Activated CD8-positive, alpha-beta T cell treated with anti-CD3 and anti-CD28 coated beads, Interleukin-2, amount 10 ng/mL, durations not matched to agents 7 days and 5 days (primary cell): ENCODE measurements at regions of chr1 and their contacts with region 1.

Region 1: DNA sequence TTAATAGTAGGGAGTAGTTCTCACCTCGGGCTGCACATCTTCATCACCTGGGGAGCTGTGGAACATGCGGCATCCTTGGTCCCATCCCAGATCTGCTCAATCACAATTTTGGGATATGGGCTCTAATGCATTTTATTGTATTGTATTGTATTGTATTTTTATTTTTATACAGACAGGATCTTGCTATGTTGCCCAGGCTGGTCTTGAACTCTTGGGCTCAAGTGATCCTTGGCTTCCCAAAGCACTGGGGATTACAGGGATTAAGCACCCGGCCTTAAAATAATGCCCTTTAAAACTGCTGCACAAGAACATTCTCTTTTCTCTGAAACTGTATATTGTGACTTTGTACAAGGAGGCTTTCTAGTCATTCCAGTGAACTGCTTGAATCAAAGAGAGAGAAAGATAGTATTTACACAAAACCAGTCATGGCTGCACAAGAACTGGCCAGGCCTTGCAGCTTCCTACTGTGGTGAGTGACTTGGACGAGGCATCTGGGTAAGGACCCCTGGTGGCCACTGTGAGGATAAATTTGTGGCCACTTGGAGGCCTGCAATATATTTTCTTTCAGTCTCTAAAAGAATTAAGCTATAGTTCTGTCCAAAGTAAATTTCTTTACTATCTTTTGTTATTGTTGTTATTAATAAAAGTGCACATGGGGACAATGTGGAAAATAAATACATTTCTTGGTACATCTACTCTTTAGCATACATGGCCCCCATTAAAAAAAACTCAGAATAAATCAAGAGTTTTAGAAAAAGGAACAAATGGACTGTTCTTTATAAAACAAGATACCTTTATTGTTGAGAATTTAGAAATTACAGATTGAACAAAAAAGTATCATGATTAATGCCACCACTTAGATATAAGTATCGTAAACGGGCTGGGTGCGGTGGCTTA is 48.0 kb downstream of the TBCE start:
- DNase-seq: peak; percentile 74
- ATAC-seq: peak; percentile 53
- H3K4me3 Mint-ChIP-seq: no peak overlapping the region
- H3K27ac Mint-ChIP-seq: no peak overlapping the region
- H3K4me1 Mint-ChIP-seq: peaks cover 9% of the 10 kb centered on the region
- H3K27me3 Mint-ChIP-seq: no peaks in the 10 kb centered on the region

Region 2: GRCh38 chr1:235122348-235122747 is 292.9 kb before region 1 on chr1:
- CTCF ChIA-PET with region 1: interaction called, 18 read pairs
- POLR2A ChIA-PET with region 1: no interaction called
- DNase-seq: no peak
- ATAC-seq: no peak
- H3K4me3 Mint-ChIP-seq: no peak overlapping the region
- H3K27ac Mint-ChIP-seq: no peak overlapping the region
- H3K4me1 Mint-ChIP-seq: peaks cover 43% of the 10 kb centered on the region
- H3K27me3 Mint-ChIP-seq: no peaks in the 10 kb centered on the region

Region 3: GRCh38 chr1:235181561-235182245 is 233.6 kb before region 1 on chr1:
- CTCF ChIA-PET with region 1: interaction called, 11 read pairs
- POLR2A ChIA-PET with region 1: no interaction called
- DNase-seq: no peak
- ATAC-seq: no peak
- H3K4me3 Mint-ChIP-seq: no peak overlapping the region
- H3K27ac Mint-ChIP-seq: peak overlapping the region; percentile 22
- H3K4me1 Mint-ChIP-seq: peaks cover 19% of the 10 kb centered on the region
- H3K27me3 Mint-ChIP-seq: no peaks in the 10 kb centered on the region

Region 4: DNA sequence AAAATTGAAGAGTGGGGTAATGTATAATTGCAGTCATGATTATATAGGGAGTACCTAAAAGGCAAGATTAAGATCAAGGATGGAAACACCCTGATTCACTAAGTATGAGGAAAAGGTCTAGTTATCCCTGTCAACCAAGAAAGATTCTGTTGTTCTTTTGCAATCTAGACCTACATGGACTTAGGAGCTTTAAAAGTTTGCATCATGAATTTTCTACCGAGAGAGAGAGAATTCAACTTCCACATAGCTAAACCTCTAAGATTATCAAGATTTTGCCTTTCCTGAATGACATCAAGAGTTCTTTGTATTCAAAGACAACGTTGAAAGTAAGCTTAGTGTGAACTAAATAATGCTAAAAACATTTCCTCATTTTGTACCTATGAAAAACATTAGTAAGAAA is 175.4 kb before region 1 on chr1:
- CTCF ChIA-PET with region 1: interaction called, 34 read pairs
- POLR2A ChIA-PET with region 1: no interaction called
- DNase-seq: no peak
- ATAC-seq: no peak
- H3K4me3 Mint-ChIP-seq: no peak overlapping the region
- H3K27ac Mint-ChIP-seq: no peak overlapping the region
- H3K4me1 Mint-ChIP-seq: peaks cover 33% of the 10 kb centered on the region
- H3K27me3 Mint-ChIP-seq: no peaks in the 10 kb centered on the region

Region 5: GRCh38 chr1:235313931-235314678 is 101.2 kb before region 1 on chr1:
- CTCF ChIA-PET with region 1: interaction called, 11 read pairs
- POLR2A ChIA-PET with region 1: no interaction called
- DNase-seq: no peak
- ATAC-seq: no peak
- H3K4me3 Mint-ChIP-seq: peak overlapping the region; percentile 14
- H3K27ac Mint-ChIP-seq: peak overlapping the region; percentile 23
- H3K4me1 Mint-ChIP-seq: peaks cover 68% of the 10 kb centered on the region
- H3K27me3 Mint-ChIP-seq: no peaks in the 10 kb centered on the region

Region 6: DNA sequence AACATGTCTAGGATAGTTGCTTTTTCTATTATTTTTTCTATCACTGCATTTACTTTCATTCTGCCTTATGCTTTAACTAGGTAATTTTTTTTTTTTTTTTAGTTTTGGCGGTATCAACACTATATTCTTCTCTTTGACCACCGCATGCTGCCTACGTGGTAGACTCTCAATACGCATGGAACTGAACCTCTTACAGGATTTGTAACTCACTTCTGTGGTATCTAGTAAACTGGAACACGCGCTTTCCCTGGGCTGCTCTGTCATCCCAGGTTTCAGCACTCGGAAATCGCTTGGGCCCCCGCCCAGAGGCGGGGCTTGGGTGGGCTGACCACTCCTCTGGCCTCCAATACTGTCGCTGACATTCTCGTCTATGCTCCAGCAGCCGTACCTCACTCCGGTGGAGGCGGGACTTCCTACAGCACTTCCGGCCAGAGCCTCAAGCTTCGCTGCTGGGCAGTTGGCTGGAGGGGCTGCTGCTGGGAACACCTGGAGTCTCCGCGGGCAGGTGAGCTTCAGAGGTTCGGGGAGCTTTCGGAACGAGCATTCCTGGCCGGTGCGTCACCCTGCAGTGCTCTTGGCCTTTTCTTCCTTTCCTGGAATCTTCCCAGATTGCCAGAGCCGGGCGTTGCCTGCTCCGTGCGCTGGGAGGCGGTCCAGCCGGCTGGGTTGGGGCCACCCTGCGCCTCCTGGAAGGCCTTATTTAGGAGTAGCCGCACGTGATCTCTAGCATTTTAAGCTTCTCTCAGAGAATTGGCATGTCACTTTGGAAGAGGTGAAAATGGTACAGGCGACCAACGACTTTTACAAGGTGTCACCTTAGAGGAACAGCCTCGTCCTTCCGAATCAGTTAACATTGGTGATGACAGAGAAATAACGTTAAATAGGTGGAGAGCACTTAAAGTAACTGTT is 48.0 kb before region 1 on chr1 and contains the start of gene TBCE:
- CTCF ChIA-PET with region 1: interaction called, 11 read pairs
- POLR2A ChIA-PET with region 1: no interaction called
- DNase-seq: peak; percentile 92
- ATAC-seq: peak; percentile 100
- H3K4me3 Mint-ChIP-seq: peak within 1 kb of the TSS; percentile 99
- H3K27ac Mint-ChIP-seq: peak within 1 kb of the TSS; percentile 93
- H3K4me1 Mint-ChIP-seq: peaks cover 31% of the 10 kb centered on the region
- H3K27me3 Mint-ChIP-seq: no peaks in the 10 kb centered on the region
- total RNA-seq, gene TBCE: 28.1 to 31.9 TPM

Region 7: DNA sequence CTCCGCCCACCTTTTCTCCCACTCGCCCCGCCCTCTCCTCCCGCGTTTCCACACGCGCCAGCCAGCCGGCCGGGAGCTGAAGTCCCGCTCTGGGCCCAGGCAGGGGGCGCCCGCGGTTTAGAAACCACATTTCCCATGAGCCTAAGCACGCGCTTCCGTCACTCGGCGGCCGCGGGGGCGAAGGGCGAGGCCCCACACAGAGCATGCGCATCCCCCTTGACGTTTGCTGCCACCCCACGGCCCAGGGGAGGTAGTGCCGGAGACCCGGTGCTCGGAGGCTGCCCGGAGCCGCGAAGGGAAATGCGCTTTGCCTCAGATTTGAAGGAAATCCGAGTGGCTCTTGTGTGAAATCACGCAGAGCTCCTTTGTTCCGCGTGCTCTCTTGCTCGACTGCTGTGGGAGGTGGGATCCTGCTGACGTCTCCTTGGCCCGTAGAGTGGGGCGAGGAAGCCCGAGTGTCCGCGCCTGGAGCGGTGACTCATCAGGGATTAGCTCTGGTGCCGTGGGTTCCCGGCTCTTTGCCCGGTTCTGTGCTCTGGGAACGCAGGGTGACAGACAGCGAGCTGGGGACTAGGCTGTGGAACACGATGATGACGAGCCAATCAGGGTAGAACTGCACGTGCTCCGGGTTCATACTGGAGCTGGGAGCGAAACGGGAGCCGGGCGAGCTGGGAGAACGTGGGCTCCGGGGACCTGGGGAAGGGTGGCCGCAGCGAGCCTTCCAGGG is 89.4 kb after region 1 on chr1:
- CTCF ChIA-PET with region 1: interaction called, 13 read pairs
- POLR2A ChIA-PET with region 1: interaction called, 4 read pairs
- DNase-seq: peak; percentile 99
- ATAC-seq: peak; percentile 86
- H3K4me3 Mint-ChIP-seq: peak overlapping the region; percentile 90
- H3K27ac Mint-ChIP-seq: peak overlapping the region; percentile 97
- H3K4me1 Mint-ChIP-seq: peaks cover 19% of the 10 kb centered on the region
- H3K27me3 Mint-ChIP-seq: peaks cover 3% of the 10 kb centered on the region

Region 8: DNA sequence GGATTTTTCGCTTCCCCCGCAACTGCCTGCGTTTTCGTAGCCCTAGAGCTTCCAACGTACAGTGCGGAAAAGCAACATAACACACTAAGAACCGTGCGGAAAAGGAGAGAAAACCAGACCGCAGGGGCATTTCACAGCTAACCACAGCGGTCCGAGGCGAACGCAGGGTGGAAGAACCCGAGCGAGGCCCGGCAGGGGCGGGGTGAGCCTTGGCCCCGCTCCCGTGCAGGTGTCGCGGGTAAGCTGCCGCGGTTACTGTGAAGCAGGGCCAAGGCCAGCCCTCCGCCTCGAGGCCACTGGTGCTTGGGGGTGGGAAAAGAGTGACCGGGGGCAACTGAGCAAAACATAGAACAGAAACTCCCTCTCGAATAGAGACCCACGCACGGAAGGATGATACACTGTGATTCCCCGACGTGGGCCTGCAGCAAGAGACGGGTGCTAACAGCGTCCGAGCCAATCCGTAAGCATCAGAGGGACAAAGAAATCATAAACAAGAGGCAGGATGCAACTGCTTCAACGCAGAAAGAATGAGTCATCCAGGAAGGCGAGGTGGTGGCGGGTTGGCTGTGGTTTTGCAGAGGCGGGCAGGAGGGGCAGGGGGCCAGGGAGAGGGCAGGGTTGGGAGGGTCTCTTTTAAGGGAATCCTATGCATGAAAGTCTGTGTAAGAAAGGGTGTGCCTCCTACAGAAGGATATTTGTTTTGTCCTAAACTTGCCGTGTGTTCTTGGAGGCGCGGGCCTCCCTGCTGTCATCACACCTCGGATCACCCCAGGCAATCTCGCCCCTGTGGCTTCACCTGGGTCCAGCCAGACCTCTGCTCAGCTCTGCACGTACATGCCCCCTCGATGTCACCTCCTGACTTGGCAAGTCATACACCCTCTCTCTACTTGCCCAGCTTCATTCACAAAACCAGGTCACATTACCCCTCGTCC is 227.0 kb after region 1 on chr1:
- CTCF ChIA-PET with region 1: no interaction called
- POLR2A ChIA-PET with region 1: no interaction called
- DNase-seq: peak; percentile 82
- ATAC-seq: peak; percentile 86
- H3K4me3 Mint-ChIP-seq: peak overlapping the region; percentile 74
- H3K27ac Mint-ChIP-seq: peak overlapping the region; percentile 71
- H3K4me1 Mint-ChIP-seq: peaks cover 24% of the 10 kb centered on the region
- H3K27me3 Mint-ChIP-seq: peaks cover 32% of the 10 kb centered on the region